Sigmoid colon (tissue), 7 donors: ENCODE measurements at regions of chr12 and their contacts with region 1.

Region 1: GRCh38 chr12:104286538-104287482 is 16.7 kb upstream of the EID3 start:
- DNase-seq: peak; percentile 97
- H3K4me3 ChIP-seq: peak overlapping the region; percentile 56 to 78 (median 66)
- H3K27ac ChIP-seq: peak overlapping the region; percentile 89 to 98 (median 90)
- H3K4me1 ChIP-seq: peaks cover 0 to 37% (median 32%) of the 10 kb centered on the region in 4 donors
- H3K27me3 ChIP-seq: no peaks in the 10 kb centered on the region
- CTCF ChIP-seq: peak in 1 of 4 experiments; percentile 17
- EP300 ChIP-seq: peak in 1 of 4 donors; percentile 61
- POLR2A ChIP-seq: peak; percentile 78 to 82

Region 2: DNA sequence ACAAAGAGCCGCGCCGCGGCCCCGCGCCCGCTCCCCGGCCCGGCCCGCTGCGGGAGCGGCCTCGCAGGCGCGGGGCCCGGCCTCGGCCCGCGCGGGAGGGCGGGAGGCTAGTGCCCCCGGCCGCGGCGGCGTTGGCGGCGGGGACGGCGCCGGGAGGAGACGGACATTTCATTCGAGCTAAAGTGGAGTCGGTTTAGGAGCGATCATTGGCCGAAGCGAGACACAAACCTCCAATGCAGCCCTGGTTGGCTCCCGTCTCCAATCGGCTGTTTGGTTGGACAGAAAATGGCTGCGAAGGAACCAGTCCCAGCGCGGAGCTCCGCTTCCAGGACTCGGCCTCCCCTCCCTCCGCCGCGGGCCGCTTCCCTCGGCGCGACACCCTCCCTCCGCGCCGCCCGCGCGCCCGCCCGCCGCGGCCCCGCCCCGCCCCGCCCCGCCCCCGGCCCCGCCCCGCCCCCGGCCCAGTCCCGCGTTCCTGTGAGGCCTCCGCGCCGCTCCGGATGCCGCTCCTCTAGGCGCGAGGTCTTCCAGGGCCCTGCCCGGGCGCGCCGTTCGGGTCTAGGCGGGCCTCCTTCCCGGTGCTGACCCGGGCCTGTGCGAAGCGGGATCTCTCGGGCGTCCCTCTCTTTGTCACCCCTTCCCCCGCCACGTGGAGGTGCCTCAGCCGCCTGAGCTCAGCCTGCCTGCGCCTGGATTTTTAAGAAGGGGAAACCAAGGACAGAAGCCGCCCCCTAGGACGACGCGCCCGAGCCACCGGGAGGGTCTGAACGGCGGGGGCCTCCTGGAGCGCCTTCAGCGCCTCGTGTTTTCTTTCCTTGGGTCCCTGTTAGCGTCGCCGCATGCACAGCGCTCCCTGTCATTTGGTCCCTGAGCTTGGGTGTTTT is 148.7 kb before region 1 on chr12 and contains the start of gene NFYB:
- intact Hi-C with region 1: loop called (anchors 5 kb)
- DNase-seq: peak; percentile 99
- H3K4me3 ChIP-seq: peak within 1 kb of the TSS; percentile 74 to 85 (median 84)
- H3K27ac ChIP-seq: peak within 1 kb of the TSS; percentile 95 to 98 (median 98)
- H3K4me1 ChIP-seq: peaks cover 2 to 49% (median 46%) of the 10 kb centered on the region in 4 donors
- H3K27me3 ChIP-seq: no peaks in the 10 kb centered on the region
- CTCF ChIP-seq: no peak
- EP300 ChIP-seq: no peak
- POLR2A ChIP-seq: peak; percentile 27 to 39
- total RNA-seq, gene NFYB: 75.2 to 91.3 (median 81.9) TPM

Region 3: GRCh38 chr12:104177663-104178501 is 108.9 kb before region 1 on chr12:
- intact Hi-C with region 1: loop called (anchors 2 kb)
- DNase-seq: peak; percentile 97
- H3K4me3 ChIP-seq: no peak overlapping the region
- H3K27ac ChIP-seq: peak overlapping the region; percentile 83 to 91 (median 89)
- H3K4me1 ChIP-seq: peaks cover 0 to 70% (median 67%) of the 10 kb centered on the region in 4 donors
- H3K27me3 ChIP-seq: no peaks in the 10 kb centered on the region
- CTCF ChIP-seq: peak in 1 of 4 experiments; percentile 23
- EP300 ChIP-seq: peak in 2 of 4 donors; percentile 97 to 99
- POLR2A ChIP-seq: no peak

Region 4: DNA sequence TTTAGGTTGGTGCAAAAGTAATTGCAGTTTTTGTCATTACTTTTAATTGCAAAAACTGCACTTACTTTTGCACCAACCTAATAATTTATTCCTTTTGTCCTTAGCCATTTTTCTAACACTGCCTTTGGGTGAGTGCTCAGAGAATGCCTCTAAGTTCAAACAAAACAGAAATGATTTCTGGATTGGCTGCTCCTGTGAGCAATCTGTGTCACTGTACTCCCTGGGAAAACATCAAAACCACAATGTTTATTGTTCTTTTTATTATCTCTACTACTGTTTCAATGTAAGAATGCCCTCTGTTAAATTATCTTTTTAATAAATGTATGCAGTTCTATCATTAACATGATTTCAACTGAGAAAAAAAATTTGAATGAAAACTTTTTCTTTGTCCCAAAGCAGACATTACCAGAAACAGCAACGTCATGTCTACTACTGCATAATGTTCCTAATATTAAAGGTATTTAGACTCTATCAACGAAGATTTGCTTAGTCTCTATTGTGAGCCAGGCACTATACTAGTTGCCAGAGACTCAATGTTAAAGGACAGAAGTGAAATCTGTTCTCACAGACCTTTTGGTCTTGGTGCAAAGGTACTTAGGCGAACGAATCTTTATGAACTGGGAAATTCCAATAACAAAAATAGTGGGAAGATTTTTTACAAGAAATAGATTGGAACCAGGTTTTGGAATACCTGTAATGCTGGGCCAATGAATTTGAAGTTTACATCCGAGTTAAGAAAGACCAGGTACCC is 665.1 kb after region 1 on chr12:
- intact Hi-C with region 1: no loop called
- DNase-seq: no peak
- H3K4me3 ChIP-seq: no peak overlapping the region
- H3K27ac ChIP-seq: no peak overlapping the region
- H3K4me1 ChIP-seq: no peaks in the 10 kb centered on the region
- H3K27me3 ChIP-seq: no peaks in the 10 kb centered on the region
- CTCF ChIP-seq: no peak
- EP300 ChIP-seq: no peak
- POLR2A ChIP-seq: no peak